PC-3 (cell line): ENCODE measurements at regions of chr7 and their contacts with region 1.

Region 1: DNA sequence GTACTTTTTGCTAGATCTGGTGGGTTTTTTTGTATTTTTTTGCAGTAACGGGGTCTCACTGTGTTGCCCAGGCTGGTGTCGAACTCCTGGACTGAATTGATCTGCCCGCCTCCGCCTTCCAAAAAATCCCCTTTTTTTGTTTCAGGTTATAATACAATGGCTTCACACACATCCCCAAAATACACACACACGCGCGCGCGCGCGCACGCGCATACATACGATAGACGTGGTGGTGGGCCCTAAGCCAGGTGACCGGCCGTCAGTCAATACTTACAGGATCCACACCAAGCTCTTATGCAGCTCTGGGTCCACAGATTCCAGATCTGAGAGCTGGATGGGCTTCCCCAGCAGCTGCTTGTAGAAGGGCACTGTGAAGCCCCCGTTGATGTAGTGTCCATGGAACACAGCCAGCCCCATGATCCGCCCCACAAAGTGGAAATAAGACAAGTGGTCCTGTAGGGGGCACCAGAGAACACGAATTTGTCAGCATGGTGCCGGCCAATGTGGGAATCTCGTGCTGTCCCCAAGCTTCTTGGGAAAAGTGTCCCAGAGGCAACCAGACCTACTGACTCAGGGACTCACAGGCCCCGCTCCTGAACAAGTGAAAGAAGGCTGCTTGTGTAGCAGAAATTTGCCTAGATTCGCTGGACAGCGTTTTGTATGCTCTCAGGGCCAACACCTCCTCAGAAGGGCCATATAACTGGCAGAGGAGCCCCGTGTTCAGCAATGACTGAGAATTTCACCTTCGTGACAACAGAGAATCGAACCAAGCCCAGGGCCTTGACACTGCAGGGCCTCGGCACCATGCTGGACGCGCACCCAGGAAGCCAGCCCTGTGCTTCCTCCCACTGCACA is 103.6 kb downstream of the SMURF1 start:
- DNase-seq: peak; percentile 90
- ATAC-seq: peak; percentile 77
- H3K4me3 ChIP-seq: no peak overlapping the region
- H3K27ac ChIP-seq: peak overlapping the region; percentile 80
- H3K4me1 ChIP-seq: peaks cover 26% of the 10 kb centered on the region
- H3K27me3 ChIP-seq: no peaks in the 10 kb centered on the region
- CTCF ChIP-seq: peak; percentile 86

Region 2: GRCh38 chr7:98630149-98630548 is 410.2 kb before region 1 on chr7:
- CTCF ChIA-PET with region 1: no interaction called
- POLR2A ChIA-PET with region 1: no interaction called
- intact Hi-C with region 1: no loop called
- DNase-seq: no peak
- ATAC-seq: no peak
- H3K4me3 ChIP-seq: no peak overlapping the region
- H3K27ac ChIP-seq: no peak overlapping the region
- H3K4me1 ChIP-seq: no peaks in the 10 kb centered on the region
- H3K27me3 ChIP-seq: peaks cover 79% of the 10 kb centered on the region
- CTCF ChIP-seq: no peak

Region 3: GRCh38 chr7:98981701-98982100 is 58.6 kb before region 1 on chr7:
- CTCF ChIA-PET with region 1: no interaction called
- POLR2A ChIA-PET with region 1: no interaction called
- intact Hi-C with region 1: no loop called
- DNase-seq: no peak
- ATAC-seq: no peak
- H3K4me3 ChIP-seq: no peak overlapping the region
- H3K27ac ChIP-seq: no peak overlapping the region
- H3K4me1 ChIP-seq: no peaks in the 10 kb centered on the region
- H3K27me3 ChIP-seq: no peaks in the 10 kb centered on the region
- CTCF ChIP-seq: no peak

Region 4: DNA sequence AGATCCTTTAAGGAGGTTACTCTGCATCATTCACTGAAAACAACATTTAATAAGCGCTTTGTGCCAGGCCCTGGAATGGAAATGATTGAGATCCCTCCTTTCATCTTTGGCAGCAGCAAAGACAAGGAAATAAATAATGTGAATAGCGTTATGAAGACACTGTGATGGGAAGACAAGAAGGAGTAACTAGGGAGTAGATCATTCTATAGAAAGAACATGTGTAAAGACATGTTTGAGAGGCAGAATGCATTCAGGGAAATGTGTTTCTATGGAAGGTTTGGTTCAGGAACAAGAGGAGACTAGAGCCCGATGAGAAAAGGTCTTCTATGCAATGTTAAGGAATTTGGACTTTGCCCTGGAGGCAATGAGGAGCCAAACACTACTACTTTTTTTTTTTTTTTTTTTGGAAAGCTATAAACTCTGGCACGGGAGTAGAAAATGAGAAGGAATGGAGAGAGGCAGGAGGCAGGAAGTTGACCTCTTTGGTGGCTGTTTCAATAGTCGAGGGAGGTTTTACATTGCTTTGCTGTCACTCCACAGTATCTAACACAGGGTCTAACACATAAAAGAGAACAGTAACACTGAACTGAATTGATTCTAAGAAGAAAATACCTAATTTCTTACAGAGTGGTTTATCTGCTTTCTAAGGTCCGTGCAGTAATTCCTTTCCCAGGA is 58.6 kb after region 1 on chr7:
- CTCF ChIA-PET with region 1: no interaction called
- POLR2A ChIA-PET with region 1: no interaction called
- intact Hi-C with region 1: loop called (anchors 5 kb)
- DNase-seq: peak; percentile 56
- ATAC-seq: no peak
- H3K4me3 ChIP-seq: no peak overlapping the region
- H3K27ac ChIP-seq: no peak overlapping the region
- H3K4me1 ChIP-seq: peaks cover 40% of the 10 kb centered on the region
- H3K27me3 ChIP-seq: no peaks in the 10 kb centered on the region
- CTCF ChIP-seq: no peak

Region 5: GRCh38 chr7:99123571-99124041 is 83.3 kb after region 1 on chr7:
- CTCF ChIA-PET with region 1: no interaction called
- POLR2A ChIA-PET with region 1: no interaction called
- intact Hi-C with region 1: loop called (anchors 5 kb)
- DNase-seq: peak; percentile 81
- ATAC-seq: peak; percentile 74
- H3K4me3 ChIP-seq: peak overlapping the region; percentile 25; the same call in 1 of the 2 replicates
- H3K27ac ChIP-seq: peak overlapping the region; percentile 93
- H3K4me1 ChIP-seq: peaks cover 46% of the 10 kb centered on the region
- H3K27me3 ChIP-seq: no peaks in the 10 kb centered on the region
- CTCF ChIP-seq: no peak

Region 6: GRCh38 chr7:99143853-99144672 is 103.7 kb after region 1 on chr7 and contains the start of gene SMURF1:
- CTCF ChIA-PET with region 1: no interaction called
- POLR2A ChIA-PET with region 1: interaction called, 3 read pairs
- intact Hi-C with region 1: loop called (anchors 5 kb)
- DNase-seq: peak; percentile 66
- ATAC-seq: peak; percentile 47
- H3K4me3 ChIP-seq: peak within 1 kb of the TSS; percentile 88
- H3K27ac ChIP-seq: peak within 1 kb of the TSS; percentile 65
- H3K4me1 ChIP-seq: peaks cover 51% of the 10 kb centered on the region
- H3K27me3 ChIP-seq: no peaks in the 10 kb centered on the region
- CTCF ChIP-seq: no peak
- total RNA-seq, gene SMURF1: 30.2 and 32.3 TPM in 2 replicates

Region 7: GRCh38 chr7:99171731-99172130 is 131.4 kb after region 1 on chr7:
- CTCF ChIA-PET with region 1: no interaction called
- POLR2A ChIA-PET with region 1: interaction called, 23 read pairs
- intact Hi-C with region 1: no loop called
- DNase-seq: no peak
- ATAC-seq: no peak
- H3K4me3 ChIP-seq: no peak overlapping the region
- H3K27ac ChIP-seq: no peak overlapping the region
- H3K4me1 ChIP-seq: no peaks in the 10 kb centered on the region
- H3K27me3 ChIP-seq: no peaks in the 10 kb centered on the region
- CTCF ChIP-seq: no peak

Region 8: DNA sequence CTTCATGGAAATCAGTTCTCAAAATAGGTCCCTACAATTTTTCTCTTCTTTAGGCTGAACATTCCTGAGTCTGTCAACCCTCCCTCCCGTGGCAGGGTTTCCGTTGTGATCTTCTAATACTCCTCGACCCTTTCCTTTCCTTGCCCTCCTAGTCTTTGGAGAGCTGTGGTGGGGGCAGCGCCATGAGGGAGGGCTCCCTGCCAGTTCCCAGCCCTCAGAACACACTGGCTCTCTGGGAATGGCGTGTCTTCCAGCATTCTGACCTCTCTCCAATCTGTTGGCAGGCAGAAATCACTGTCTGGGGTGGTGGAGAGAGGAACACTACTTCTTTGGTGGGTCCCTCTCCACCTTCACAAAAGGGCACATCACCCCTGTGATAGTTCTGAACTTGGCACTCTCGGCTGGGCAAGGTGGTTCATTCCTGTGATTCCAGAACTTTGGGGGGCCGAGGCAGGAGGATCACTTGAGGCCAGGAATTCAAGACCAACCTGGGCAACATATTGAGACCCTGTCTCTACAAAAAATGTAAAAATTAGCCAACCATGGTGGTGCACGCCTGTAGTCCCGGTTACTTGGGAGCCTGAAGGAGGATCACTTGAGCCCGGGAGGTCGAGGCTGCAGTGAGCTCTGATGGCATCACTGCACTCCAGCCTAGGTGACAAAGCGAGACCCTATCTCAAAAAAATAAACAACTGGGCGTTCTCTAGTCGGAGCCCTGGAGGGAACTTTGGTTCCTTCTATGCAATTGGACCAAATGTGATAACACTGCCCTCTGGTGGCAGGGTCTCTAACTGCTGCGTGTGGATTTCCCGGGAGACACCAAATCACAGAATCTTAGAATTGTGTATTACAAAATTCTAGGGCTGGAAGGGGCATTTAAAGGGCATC is 272.2 kb after region 1 on chr7:
- CTCF ChIA-PET with region 1: no interaction called
- POLR2A ChIA-PET with region 1: no interaction called
- intact Hi-C with region 1: loop called (anchors 1 kb)
- DNase-seq: peak; percentile 86
- ATAC-seq: peak; percentile 60
- H3K4me3 ChIP-seq: no peak overlapping the region
- H3K27ac ChIP-seq: no peak overlapping the region
- H3K4me1 ChIP-seq: peaks cover 22% of the 10 kb centered on the region; the same call in 1 of the 2 replicates
- H3K27me3 ChIP-seq: no peaks in the 10 kb centered on the region
- CTCF ChIP-seq: peak; percentile 92

Region 9: GRCh38 chr7:99325545-99326407 is 285.4 kb after region 1 on chr7 and contains the start of gene ARPC1A:
- CTCF ChIA-PET with region 1: interaction called, 7 read pairs
- POLR2A ChIA-PET with region 1: no interaction called
- intact Hi-C with region 1: loop called (anchors 5 kb)
- DNase-seq: peak; percentile 94
- ATAC-seq: peak; percentile 78
- H3K4me3 ChIP-seq: peak within 1 kb of the TSS; percentile 72
- H3K27ac ChIP-seq: peak within 1 kb of the TSS; percentile 65
- H3K4me1 ChIP-seq: peaks cover 35% of the 10 kb centered on the region
- H3K27me3 ChIP-seq: no peaks in the 10 kb centered on the region
- CTCF ChIP-seq: no peak
- total RNA-seq, gene ARPC1A: 183 and 193 TPM in 2 replicates